BJ (cell line): ENCODE measurements at regions of chr22 and their contacts with region 1.

Region 1: GRCh38 chr22:29375398-29376076 is 12.8 kb downstream of the AP1B1 start:
- DNase-seq: no peak
- H3K4me3 ChIP-seq: no peak overlapping the region
- H3K27me3 ChIP-seq: no peaks in the 10 kb centered on the region
- CTCF ChIP-seq: no peak

Region 2: DNA sequence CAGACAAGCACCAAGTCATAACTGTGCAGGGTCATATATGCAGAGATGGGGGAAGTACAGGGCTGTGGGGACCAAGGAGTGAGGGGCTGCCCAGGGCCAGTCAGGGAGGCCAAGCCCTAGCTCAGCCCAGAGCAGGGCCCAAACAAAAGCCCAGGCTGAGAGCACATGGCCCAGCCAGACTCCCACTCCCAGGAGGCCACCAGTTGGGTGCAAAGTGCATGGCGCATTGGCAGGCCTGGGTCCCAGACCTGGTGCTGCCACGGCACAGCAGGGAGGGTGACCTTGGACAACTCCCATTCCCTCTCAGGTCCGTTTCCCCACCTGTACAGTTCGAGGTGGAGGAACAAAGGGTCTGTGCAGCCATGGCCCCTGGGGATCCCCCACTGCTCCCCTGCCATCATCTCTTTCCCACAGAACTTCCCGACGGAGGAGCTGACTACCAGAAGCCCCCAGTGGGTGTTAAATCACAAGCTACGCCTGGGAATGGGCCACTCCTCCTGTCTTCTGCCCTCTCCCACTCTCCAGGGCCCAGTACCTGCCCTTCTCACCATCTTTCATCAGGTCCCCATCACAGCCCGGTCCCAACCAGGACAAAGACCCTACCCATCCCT is 204.8 kb after region 1 on chr22:
- CTCF ChIA-PET with region 1: no interaction called
- POLR2A ChIA-PET with region 1: interaction called, 11 read pairs
- DNase-seq: no peak
- H3K4me3 ChIP-seq: peak overlapping the region; percentile 73
- H3K27me3 ChIP-seq: no peaks in the 10 kb centered on the region
- CTCF ChIP-seq: no peak